RWPE1 (cell line): ENCODE measurements at regions of chr7 and their contacts with region 1.

Region 1: DNA sequence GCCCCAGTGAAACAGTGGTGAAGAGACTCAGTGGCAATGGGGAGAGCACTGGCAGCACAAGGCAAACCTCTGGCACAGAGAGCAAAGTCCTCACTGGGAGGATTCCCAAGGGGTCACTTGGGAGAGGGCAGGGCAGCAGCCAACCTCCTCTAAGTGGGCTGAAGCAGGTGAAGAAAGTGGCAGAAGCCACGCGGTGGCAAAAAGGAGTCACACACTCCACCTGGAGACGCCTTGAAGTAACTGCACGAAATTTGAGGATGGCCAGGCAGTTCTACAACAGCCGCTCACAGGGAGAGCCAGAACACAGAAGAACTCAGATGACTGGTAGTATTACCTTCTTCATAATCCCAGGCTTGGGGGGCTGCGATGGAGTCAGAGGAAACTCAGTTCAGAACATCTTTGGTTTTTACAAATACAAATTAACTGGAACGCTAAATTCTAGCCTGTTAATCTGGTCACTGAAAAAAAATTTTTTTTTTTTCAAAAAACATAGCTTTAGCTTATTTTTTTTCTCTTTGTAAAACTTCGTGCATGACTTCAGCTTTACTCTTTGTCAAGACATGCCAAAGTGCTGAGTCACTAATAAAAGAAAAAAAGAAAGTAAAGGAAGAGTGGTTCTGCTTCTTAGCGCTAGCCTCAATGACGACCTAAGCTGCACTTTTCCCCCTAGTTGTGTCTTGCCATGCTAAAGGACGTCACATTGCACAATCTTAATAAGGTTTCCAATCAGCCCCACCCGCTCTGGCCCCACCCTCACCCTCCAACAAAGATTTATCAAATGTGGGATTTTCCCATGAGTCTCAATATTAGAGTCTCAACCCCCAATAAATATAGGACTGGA is 435 bp upstream of the IL6 start:
- DNase-seq: peak; percentile 74
- H3K27ac ChIP-seq: peak overlapping the region; percentile 90
- CTCF ChIP-seq: peak; percentile 73

Region 2: DNA sequence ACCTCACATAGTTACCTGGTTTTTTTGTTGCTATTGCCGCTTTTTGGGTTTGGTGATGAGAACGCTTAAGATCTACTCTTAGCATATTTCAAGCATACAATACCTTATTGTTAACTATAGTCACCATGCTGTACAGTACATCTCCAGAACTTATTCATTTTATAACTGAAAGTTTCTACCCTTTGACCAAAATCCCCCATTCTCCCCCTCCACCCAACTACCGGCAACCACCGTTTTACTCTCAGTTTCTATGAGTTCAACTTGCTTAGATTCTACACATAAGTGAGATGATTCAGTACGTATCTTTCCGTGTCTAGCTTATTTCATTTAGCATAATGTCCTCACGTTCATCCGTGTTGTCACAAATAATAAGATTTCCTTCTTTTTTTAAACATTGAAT is 86.3 kb before region 1 on chr7:
- CTCF ChIA-PET with region 1: no interaction called
- POLR2A ChIA-PET with region 1: no interaction called
- DNase-seq: no peak
- H3K27ac ChIP-seq: no peak overlapping the region
- CTCF ChIP-seq: no peak

Region 3: DNA sequence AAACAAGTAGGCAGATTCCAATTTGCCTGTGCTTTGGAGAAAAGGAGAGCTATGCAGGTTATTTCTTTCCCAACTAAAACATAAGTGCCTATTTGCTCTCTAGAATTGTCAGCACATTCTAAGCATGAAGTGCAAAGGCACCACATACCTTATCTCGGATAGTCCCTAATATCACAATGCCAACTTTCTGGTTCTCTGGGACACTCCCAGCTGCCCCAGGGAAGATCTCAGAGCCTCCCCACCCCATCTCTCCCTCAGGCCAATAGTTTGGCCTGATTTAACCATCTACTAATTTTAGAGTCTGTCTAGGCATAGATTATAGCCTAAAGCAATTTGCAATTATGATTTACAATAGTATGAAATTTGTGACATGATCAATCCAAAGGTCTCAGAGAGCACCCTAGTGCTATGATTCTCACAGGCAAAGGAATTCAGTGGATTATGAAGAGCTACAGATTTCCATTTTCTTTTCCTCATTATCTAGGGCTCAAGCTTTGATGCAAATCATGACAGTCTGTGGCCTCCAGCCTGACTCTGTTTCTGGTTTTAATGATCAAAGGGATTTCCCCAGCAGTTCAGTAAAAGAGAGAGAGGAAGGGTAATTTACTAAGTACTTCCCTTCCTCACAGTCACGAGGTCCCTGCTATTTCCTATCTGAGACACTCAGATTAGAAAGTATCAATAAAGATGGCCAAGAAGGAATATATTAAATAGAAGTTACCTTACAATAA is 28.5 kb before region 1 on chr7:
- CTCF ChIA-PET with region 1: interaction called, 11 read pairs
- POLR2A ChIA-PET with region 1: no interaction called
- DNase-seq: no peak
- H3K27ac ChIP-seq: no peak overlapping the region
- CTCF ChIP-seq: no peak

Region 4: DNA sequence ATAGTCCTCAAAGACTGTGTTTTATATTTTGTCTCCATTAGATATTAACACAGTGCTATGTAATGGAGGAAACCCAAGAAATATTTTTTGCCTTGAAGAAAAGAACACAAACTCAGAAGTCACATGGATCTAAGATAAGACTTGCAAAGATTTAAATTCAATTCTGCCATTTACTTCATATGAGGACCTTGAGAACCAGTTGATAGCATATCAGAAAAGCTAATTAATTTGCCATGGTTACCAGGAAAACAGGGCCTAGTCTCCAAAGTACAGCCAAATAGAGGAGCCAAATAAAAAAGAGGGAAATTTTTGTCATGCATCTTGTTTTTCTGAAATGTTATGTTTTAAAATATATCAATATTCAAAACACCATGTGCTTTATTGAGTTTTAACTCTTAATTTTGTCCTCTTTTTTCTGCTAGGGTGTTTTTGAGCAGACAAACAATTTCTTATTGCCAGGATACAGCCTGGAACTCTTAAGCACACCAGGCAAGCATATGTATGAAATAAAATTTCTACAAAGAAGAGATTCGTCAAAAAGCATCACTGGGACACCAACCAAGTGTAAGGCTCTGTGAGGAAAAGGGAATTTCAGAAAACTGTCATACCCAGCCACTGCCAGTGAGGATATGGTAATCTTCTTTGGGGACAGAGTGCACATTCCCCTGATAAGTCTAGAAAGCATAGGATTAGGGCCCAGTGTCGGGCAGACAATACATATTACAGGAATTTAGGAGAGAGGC is 106.7 kb after region 1 on chr7:
- CTCF ChIA-PET with region 1: no interaction called
- POLR2A ChIA-PET with region 1: no interaction called
- DNase-seq: no peak
- H3K27ac ChIP-seq: no peak overlapping the region
- CTCF ChIP-seq: no peak

Region 5: GRCh38 chr7:23981320-23981719 is 1254.8 kb after region 1 on chr7:
- CTCF ChIA-PET with region 1: no interaction called
- POLR2A ChIA-PET with region 1: no interaction called
- DNase-seq: no peak
- H3K27ac ChIP-seq: no peak overlapping the region
- CTCF ChIP-seq: no peak